Astrocyte of the cerebellum (primary cell): ENCODE measurements at regions of chr7 and their contacts with region 1.

Region 1: DNA sequence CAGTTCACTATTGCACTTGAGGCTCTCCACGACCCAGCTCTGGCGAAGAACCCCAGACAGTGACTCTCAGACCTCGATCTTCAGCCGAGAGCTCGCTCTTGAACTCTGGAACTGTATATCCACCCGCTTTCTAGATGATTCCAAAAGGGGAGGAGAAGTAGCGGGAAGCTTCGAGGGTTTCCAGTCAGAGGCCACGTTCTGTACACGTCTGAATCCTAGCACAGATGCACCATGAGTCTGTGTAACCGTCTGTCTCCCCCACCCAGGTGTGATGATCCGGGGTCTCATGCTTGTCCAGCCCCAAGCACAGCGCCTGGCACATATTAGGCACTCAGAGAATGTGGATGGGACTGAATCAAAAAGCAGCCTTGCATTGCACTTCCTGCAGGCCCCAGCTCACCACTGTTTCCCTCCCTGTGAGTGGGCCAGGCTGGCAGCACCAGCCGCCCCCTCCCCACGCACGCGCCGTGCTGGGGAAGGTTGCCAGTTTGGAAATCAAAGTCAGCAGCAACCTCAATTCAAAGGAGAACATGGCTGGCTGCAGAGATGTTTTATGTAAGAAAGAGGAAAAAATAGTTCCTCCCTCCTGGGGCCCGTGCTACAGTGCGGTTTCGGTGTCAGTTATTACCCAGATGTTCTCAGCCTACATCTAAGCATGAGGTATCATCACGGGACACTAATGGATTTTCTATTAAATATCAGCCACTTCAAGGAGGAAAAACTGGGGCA is 5.7 kb downstream of the GRID2IP start:
- DNase-seq: no peak
- H3K4me3 ChIP-seq: no peak overlapping the region
- CTCF ChIP-seq: no peak

Region 2: GRCh38 chr7:6465862-6466261 is 79.7 kb before region 1 on chr7:
- in situ Hi-C with region 1: no loop called
- DNase-seq: no peak
- H3K4me3 ChIP-seq: no peak overlapping the region
- CTCF ChIP-seq: no peak

Region 3: GRCh38 chr7:6589829-6590644 is 44.5 kb after region 1 on chr7 and contains the start of gene INTS15:
- in situ Hi-C with region 1: no loop called
- DNase-seq: peak; percentile 41
- H3K4me3 ChIP-seq: peak within 1 kb of the TSS; percentile 83
- CTCF ChIP-seq: peak; percentile 34

Region 4: DNA sequence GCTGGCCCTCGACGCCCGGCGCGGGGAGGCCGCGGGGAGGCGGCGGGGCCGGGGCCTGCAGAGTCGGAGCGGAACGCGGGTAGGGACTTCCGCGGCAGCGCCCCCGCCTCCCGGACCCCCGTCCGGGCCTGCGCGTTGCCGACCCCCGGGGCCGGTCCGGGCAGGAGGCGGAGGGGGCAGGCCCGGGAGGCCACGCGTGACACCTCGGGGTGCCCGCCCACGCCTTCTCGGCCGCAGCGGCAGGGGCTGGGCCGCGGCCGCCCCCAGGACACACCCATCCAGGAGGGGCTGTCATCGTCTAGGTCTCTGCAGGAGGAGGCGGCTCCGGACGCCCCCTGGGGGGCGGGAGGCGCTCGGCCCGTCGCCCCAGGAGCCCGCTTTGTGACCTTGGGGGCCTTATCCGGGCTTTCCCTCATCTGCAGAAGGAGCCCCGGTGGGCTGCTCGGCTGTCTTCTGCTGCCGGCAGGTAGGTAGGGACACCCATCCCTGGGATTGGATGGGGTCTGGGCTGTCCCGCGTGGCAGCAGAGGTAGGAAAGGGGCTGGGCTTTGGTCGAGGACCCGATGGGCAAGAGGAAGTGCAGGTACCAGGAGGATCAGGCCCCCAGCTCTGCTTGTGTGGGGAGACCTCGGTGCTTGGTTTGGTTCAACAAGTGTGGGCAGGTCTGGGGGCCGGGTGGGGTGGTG is 92.1 kb after region 1 on chr7:
- in situ Hi-C with region 1: loop called (anchors 10 kb)
- DNase-seq: no peak
- H3K4me3 ChIP-seq: peak overlapping the region; percentile 67
- CTCF ChIP-seq: no peak